AG04450 (cell line): ENCODE measurements at regions of chr2 and their contacts with region 1.

Region 1: GRCh38 chr2:218152765-218153164 is 14.0 kb downstream of the CXCR1 start:
- DNase-seq: no peak
- H3K4me3 ChIP-seq: no peak overlapping the region
- H3K27ac ChIP-seq: no peak overlapping the region
- H3K27me3 ChIP-seq: peaks cover 29% of the 10 kb centered on the region
- CTCF ChIP-seq: no peak

Region 2: DNA sequence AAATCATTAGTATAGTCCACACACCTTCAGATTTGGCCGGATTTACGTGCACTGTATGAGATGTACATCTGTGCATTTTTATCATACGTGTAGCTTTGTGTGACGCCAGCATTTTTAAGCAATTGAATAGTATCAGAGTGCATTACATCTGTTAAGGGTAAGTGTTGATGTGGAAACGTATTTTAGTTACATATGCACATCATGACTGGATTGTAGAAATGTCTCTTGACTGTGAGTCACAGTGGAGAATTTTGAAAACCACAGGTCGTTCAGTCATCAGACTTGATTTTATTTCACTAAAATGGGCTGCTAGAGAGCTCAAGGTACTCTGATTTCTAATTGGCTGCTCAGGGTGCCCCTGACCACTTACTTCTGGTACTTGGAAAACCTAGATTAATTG is 102.7 kb after region 1 on chr2:
- CTCF ChIA-PET with region 1: no interaction called
- POLR2A ChIA-PET with region 1: interaction called, 12 read pairs
- DNase-seq: peak; percentile 20
- H3K4me3 ChIP-seq: no peak overlapping the region
- H3K27ac ChIP-seq: no peak overlapping the region
- H3K27me3 ChIP-seq: no peaks in the 10 kb centered on the region
- CTCF ChIP-seq: no peak